Right ventricle myocardium inferior (tissue), 1 donor: ENCODE measurements at regions of chr21 and their contacts with region 1.

Region 1: DNA sequence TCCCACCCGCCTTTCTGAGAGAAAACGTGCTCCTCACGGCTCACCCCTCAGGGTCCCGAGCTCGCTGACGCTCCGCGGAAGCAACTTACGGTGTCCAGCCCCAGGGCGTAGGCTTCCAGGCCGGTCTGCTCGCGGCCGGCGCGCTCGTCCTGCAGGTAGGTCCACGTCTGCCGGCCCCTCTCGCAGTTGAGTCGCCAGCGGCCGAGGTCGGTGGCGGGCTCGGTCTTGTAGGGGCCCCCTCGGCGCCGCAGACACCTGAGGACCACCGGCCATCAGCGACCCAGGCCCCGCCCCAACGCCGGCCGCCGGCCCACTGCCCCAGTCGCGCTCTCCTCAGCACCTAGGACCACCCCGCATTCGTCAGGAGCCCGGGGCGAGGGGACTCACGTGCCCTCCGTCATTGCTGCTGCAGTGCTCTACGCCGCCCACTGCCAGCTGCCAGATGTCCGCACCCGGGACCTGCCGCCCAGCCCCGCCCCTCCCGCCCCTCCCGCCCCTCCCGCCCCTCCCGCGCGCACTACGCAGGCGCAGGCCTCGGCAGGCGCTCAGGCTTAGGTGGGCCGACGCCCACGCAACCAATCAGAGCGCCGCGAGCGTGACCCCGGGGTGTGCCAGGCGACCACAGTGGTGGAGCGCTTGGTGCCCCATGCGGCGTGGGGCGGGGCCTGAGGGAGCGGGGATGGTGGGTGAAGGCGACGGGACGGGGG is at the start of gene LSS:
- DNase-seq: peak; percentile 99
- ATAC-seq: peak; percentile 95
- total RNA-seq, gene LSS: 61.0 TPM

Region 2: GRCh38 chr21:45688649-45689048 is 539.8 kb before region 1 on chr21:
- intact Hi-C with region 1: no loop called
- DNase-seq: no peak
- ATAC-seq: no peak

Region 3: GRCh38 chr21:46144464-46145070 is 83.9 kb before region 1 on chr21:
- intact Hi-C with region 1: loop called (anchors 5 kb)
- DNase-seq: peak; percentile 42
- ATAC-seq: no peak

Region 4: DNA sequence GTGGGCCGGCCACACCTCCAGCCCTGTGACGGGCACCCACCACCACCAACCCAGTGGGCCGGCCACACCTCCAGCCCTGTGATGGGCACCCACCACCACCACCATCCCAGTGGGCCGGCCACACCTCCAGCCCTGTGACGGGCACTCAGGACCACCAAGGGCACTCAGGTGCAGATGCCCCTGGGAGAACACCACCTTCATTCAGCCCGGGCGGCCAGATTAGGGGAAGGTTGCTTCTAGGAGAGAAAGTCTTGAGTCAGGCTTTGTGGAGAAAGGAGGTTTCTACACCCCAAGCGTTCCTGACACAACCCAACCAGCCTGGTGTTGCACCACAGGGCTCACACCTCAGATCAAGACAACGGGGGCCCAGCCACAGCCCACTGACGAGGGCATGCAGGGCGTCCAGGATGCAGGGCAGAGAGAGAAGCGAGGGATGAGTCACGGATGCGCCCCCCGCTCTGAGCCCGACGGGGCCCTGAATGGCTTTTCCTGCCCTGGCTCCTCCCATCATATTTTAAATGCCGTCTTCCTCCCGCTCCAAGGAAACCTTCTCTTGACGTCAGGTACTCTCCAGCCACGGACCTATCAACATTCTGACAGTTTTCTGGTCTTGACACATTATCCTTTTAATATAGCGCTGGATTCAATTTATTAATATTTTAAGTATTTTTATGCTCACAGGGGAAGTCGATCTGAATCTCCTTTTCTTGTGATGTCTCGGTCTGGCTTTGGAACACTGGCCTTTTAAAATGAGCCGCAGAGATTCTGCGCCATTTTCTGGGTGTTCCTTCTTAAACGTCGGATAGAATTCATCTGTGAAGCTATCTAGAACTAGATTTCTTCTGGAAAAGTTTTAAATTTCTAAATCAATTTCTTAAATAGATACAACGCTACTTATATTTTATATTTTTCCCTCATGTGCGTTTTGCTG is 43.6 kb before region 1 on chr21:
- intact Hi-C with region 1: loop called (anchors 2 kb)
- DNase-seq: peak; percentile 95
- ATAC-seq: peak; percentile 57

Region 5: DNA sequence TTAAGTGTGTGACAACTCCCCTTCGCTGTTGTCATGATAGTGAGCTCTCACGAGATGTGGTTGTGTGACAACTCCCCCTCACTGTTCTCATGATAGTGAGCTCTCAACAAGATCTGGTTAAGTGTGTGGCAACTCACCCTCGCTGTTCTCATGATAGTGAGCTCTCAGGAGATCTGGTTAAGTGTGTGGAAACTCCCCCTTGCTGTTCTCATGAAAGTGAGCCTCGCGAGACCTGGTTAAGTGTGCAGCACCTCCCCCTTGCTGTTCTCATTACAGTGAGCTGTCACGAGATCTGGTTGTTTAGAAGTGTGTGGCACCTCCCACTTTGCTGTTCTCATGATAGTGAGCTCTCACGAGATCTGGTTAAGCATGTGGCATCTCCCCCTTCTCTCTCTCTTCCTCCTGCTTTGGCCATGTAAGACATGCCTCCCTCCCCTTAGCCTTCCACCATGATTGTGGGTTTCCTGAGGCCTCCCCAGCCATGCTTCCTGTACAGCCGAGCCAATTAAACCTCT is 25.2 kb after region 1 on chr21:
- intact Hi-C with region 1: no loop called
- DNase-seq: no peak
- ATAC-seq: no peak

Region 6: GRCh38 chr21:46285761-46286496 is 57.4 kb after region 1 on chr21 and contains the start of gene YBEY:
- intact Hi-C with region 1: loop called (anchors 5 kb)
- DNase-seq: peak; percentile 93
- ATAC-seq: peak; percentile 97
- total RNA-seq, gene YBEY: 18.6 TPM

Region 7: GRCh38 chr21:46442938-46443337 is 214.4 kb after region 1 on chr21:
- intact Hi-C with region 1: no loop called
- DNase-seq: no peak
- ATAC-seq: no peak

Region 8: DNA sequence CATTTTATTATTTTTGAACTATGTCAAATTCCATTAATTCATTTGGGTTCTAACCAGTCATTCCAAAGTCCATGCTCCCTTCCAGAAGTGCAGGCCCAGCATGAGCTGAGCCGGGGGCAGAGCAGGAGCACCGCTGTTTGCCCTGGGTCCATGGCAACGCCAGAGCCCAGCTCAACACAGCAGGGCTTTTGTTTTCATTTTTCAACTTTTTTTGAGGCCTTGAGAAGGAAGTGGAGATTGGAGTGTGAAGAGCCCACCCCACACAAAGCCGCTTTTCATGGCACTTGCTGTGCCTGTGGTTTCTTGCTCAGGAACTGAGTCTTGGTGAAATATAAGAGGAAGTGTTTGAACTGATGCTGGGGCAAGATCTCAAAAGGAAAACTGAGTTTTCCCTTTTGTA is 393.7 kb after region 1 on chr21:
- intact Hi-C with region 1: no loop called
- DNase-seq: peak; percentile 80
- ATAC-seq: peak; percentile 85